ENCODE measurements at regions of chr9 and their contacts with region 1.

Region 1: DNA sequence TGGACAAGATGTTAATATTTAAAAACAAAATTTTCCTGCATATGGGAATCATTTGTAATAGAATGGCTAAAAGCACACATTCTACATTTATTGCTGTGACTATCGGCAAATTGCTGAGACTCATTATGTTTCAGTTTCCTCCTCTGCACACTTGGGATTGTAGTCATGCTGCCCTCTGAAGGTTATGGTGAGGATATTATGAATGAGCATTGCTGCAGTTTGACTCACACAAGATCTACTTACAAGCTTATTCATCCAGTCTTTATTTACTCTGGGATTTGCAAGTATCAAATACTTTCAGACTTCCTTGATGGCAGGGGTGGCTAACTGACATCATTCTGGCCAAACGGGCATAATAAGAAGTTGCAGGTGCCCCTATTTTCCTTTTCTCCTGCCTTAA is 9.5 kb upstream of the NFIL3 start:
- DNase-seq: no peak
- ATAC-seq: peak; percentile 81
- H3K4me3 ChIP-seq: no peak overlapping the region
- H3K27ac ChIP-seq: no peak overlapping the region
- H3K4me1 ChIP-seq: no peaks in the 10 kb centered on the region
- H3K27me3 ChIP-seq: no peaks in the 10 kb centered on the region

Region 2: GRCh38 chr9:90914868-90915483 is 518.2 kb before region 1 on chr9:
- intact Hi-C with region 1: loop called (anchors 5 kb)
- DNase-seq: peak; percentile 73 to 87
- ATAC-seq: peak; percentile 89
- H3K4me3 ChIP-seq: no peak overlapping the region
- H3K27ac ChIP-seq: no peak overlapping the region
- H3K4me1 ChIP-seq: peaks cover 0 to under 1% of the 10 kb centered on the region in 2 donors
- H3K27me3 ChIP-seq: no peaks in the 10 kb centered on the region

Region 3: DNA sequence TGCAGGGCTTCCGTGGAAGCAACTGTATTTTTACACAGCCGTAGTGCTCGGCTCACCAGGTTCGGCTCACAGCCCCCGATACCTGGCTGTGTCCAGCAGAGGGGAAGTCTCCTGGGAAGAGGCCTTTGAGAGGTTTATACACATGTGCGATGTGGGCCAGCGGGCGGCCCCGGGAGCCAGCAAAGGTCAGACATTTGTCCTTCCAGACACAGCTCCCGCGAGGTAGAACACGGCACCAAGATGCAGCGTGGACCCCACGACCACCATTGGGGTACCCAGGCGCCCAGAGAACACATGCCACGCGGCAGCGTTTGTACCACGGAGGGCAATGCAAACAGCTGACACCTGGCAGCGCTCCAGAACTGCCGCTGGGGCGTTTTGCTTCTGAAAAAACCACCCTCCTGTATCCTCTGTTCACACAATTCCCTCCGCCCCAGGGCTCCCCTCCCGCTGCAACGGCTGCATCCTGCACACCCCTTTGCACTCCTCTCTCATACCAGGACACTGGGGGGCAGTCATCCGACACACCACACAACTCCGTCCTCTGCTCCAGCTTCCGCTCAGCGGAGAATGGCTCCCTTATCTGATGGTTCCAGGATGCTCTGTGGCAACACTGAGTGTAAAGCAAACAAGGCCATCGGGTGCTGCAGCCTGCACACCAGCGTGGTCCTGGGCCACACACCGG is 396.2 kb before region 1 on chr9:
- intact Hi-C with region 1: loop called in 1 of 2 experiments (anchors 5 kb)
- DNase-seq: peak; percentile 85 to 90
- ATAC-seq: peak; percentile 94
- H3K4me3 ChIP-seq: no peak overlapping the region
- H3K27ac ChIP-seq: no peak overlapping the region
- H3K4me1 ChIP-seq: no peaks in the 10 kb centered on the region
- H3K27me3 ChIP-seq: no peaks in the 10 kb centered on the region

Region 4: DNA sequence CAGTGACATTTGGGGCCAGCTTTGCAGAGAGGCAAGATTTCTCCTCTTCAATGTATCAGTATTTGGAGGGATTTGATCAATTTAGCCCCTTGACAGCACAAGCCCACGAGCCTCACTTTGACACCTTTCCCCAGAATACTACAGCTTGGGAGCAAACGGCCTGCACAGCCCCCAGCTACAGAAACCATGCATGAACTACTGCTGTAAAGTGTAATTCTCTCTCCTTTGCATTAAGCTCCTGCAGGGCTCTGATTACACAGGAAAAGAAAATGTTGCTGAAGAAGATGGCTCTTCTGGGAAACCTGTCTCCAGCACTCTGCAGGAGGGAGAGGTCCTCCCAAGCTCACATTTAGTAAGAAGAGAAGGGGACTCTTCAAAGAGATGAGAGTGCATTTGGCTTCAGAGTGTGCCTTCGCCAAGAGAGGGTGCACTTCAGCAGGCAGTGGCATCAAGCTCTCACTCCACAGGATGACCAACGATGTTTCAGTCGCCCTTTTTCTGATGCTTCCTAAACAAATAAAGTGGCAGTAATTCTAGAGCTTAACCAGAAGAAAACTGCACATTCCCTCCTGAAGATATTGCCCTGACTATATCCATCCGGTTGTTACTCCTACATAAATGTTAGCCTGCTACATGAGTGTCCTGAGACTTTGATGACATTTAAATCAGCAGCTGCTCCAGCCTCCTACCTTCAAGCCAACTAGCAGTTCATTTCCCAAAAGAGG is 343.6 kb before region 1 on chr9:
- intact Hi-C with region 1: loop called in 1 of 2 experiments (anchors 5 kb)
- DNase-seq: no peak
- ATAC-seq: peak; percentile 64
- H3K4me3 ChIP-seq: no peak overlapping the region
- H3K27ac ChIP-seq: no peak overlapping the region
- H3K4me1 ChIP-seq: no peaks in the 10 kb centered on the region
- H3K27me3 ChIP-seq: no peaks in the 10 kb centered on the region

Region 5: DNA sequence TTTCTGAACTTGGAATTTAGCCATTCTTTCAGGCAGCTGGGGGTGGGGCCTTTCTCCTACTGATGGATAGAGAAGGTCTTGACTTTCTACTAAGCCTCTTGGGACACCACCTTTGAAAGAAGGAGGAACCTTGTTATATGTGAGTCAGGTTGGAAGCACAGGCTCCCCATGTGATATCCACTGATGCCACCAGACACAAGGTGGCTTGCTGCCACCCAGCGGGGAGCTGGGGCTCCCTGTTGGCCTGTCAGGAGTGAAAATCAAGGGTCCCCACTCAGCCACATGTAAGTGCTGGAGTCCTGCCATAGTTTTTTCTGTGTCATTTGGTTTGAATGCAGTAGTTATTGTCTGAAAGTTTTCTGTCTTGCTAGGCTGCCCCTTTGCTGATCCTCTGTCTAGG is 242.9 kb after region 1 on chr9:
- intact Hi-C with region 1: loop called in 1 of 2 experiments (anchors 5 kb)
- DNase-seq: no peak
- ATAC-seq: no peak
- H3K4me3 ChIP-seq: no peak overlapping the region
- H3K27ac ChIP-seq: no peak overlapping the region
- H3K4me1 ChIP-seq: no peaks in the 10 kb centered on the region
- H3K27me3 ChIP-seq: no peaks in the 10 kb centered on the region

Measured in aorta (tissue), 5 donors.